ENCODE measurements at regions of chr9 and their contacts with region 1.

Region 1: DNA sequence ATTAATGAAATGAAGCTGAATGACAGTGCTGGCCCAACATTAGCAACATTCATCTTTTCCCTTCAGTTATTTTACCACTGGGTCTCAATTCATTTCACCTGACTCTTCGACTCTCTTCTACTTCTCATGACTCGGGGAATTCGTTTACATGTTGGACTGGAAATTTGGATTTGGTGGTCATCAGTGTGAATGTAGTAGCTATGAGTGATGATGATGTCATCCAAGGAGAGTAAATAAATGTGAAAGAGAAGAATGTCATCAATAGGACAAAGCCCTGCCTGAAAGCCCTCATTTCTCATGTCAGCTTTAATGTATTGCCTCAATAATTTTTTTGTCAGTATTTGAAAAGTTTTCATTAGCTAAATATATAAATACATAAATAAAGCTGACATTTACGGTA is 21.9 kb upstream of the CFAP95 start:
- DNase-seq: no peak

Region 2: DNA sequence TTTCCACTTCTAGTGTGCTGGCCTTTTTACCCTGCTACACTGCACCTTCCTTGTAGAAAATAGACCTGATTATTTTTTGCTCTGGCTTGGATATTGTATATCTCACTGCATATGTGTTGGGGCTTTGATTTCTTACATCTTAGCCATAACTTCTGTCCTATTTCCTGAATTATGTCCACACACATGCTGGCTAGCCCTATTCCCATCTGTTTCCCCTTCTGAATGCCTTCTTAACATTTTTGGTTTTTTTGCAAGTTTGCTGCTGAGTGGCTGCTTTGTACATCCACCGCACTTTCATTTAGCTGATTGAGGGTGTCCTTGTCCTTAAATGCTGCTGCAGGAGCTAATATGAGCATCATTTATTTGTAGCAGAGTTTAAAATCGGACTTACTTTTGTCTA is 48.7 kb after region 1 on chr9:
- intact Hi-C with region 1: loop called (anchors 5 kb)
- DNase-seq: no peak

Region 3: GRCh38 chr9:70205367-70206032 is 406.8 kb after region 1 on chr9:
- intact Hi-C with region 1: no loop called
- DNase-seq: no peak

Measured in posterior cingulate gyrus (tissue), 11 donors.